ENCODE measurements at regions of chr10 and their contacts with region 1.

Region 1: DNA sequence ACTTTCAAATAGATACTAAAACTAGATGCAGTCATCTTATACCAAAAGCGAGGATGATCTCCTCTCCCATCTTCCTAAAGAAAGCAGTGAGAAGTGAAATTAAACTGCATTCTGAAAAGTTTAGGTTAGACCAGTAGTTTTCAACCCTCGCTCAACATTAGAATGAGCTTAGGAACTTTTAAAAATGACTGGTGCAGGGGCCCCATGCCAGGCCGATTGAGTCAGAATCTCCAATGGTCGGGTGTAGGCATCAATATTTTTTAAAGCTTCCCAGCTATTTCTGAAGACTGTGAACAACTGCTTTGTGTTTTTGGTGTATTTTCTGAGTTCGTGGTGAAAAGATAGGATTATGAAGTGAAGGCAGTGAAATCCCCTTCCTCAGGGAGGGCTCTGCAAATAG is 146.0 kb downstream of the VTI1A start:
- DNase-seq: no peak
- ATAC-seq: no peak
- H3K4me3 ChIP-seq: no peak overlapping the region
- H3K27ac ChIP-seq: no peak overlapping the region
- H3K4me1 ChIP-seq: no peaks in the 10 kb centered on the region
- H3K27me3 ChIP-seq: no peaks in the 10 kb centered on the region
- CTCF ChIP-seq: no peak

Region 2: DNA sequence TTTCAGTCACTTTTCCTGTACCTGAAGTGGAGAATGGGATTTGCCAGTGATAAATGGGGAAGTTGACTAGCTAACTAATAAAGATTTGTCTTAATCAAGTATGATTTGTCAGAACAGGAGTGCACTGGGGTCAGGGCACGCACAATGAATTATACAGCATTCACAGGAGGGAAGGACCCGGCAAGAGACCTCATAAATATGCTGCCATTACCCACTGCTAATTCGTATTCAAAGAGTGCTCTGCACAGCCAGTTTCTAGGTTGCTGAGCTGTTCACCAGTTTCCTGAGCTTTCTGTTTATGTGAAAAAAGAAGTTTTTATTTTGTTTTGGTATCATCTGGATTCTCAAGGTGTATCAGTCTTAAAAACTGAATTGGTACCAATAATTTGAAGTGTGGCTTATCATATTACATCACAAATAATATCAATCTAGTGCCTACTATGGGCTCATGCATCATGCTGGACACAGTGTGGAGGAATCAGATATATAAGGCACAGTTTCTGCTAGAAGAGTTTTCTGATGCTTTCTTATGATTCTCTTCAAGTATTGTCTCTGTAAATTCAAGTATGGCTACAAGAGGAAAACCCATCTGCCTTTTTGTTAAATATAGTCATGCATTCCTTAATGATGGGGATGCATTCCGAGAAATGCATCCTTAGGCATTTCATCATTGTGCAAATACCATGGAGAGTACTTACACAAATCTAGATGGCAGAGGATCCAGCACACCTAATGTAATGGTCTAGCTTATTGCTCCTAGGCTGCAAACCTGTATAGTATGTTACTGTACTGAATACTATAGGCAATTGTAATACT is 56.2 kb after region 1 on chr10:
- intact Hi-C with region 1: loop called in 1 of 2 experiments (anchors 2 kb)
- DNase-seq: no peak
- ATAC-seq: no peak
- H3K4me3 ChIP-seq: no peak overlapping the region
- H3K27ac ChIP-seq: no peak overlapping the region
- H3K4me1 ChIP-seq: no peaks in the 10 kb centered on the region
- H3K27me3 ChIP-seq: no peaks in the 10 kb centered on the region
- CTCF ChIP-seq: no peak

Measured in psoas muscle (tissue), 8 donors.